Esophagus muscularis mucosa (tissue), 4 donors: ENCODE measurements at regions of chr11 and their contacts with region 1.

Region 1: DNA sequence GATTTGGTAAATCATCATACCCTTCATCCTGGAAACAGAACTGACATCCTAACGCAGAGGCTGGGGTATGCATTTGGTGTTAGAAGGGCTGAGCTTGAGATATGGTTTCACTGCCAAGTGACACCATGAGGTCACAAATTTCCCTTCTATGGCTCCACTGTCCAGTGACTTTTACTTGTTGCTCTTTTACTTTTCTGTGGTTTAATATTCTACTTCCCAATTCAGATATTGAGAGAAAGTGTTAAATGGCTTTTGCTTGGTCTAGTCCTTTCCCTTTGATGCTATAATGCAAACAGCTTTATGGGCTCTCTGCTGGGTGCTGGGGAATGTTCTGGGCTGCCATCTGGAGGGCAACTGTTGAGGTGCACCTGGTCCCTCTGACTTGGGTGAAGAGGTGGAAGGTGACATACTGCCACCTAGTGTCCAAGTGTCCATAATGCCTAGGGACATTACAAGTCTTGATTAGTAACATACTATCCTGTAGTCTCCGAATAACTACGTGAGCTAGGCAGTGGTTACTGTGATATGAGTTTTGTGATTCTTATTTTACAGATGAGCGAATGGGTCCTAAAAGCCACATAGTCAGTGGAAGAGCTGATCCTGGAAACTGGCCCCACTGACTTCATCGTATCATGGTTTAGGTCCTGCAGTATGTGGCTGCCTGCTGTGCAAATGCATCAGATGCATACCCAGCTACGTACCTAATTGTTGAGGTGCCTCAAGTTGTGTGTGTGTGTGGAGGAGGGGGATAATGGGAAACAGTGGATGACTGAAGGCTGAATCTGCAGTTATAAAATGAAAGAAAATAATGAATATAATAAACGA is 149.1 kb upstream of the RAG2 start:
- DNase-seq: peak; percentile 95
- H3K4me3 ChIP-seq: no peak overlapping the region
- H3K27ac ChIP-seq: no peak overlapping the region
- H3K4me1 ChIP-seq: peaks cover 0 to 18% (median 10%) of the 10 kb centered on the region in 4 donors
- H3K27me3 ChIP-seq: no peaks in the 10 kb centered on the region
- CTCF ChIP-seq: peak; percentile 87 to 97 (median 96)
- EP300 ChIP-seq: no peak
- POLR2A ChIP-seq: no peak

Region 2: GRCh38 chr11:36702330-36703055 is 44.6 kb before region 1 on chr11:
- intact Hi-C with region 1: loop called (anchors 2 kb)
- DNase-seq: no peak
- H3K4me3 ChIP-seq: no peak overlapping the region
- H3K27ac ChIP-seq: no peak overlapping the region
- H3K4me1 ChIP-seq: no peaks in the 10 kb centered on the region
- H3K27me3 ChIP-seq: peaks cover 0 to 5% (median 0%) of the 10 kb centered on the region in 4 donors
- CTCF ChIP-seq: peak; percentile 71 to 81 (median 73)
- EP300 ChIP-seq: no peak
- POLR2A ChIP-seq: no peak